ENCODE measurements at regions of chr5 and their contacts with region 1.

Region 1: GRCh38 chr5:142807372-142807911 is 37.3 kb downstream of the ARHGAP26 start:
- DNase-seq: no peak
- H3K4me3 ChIP-seq: no peak overlapping the region
- H3K27ac ChIP-seq: no peak overlapping the region
- H3K4me1 ChIP-seq: peaks cover 2 to 12% (median 7%) of the 10 kb centered on the region in 4 experiments; a peak in 4 of 7 replicates
- H3K27me3 ChIP-seq: no peaks in the 10 kb centered on the region; a peak in 1 of 7 replicates
- CTCF ChIP-seq: no peak
- EP300 ChIP-seq: no peak
- POLR2A ChIP-seq: no peak
- RAD21 ChIP-seq: no peak

Region 2: GRCh38 chr5:142699184-142699720 is 108.2 kb before region 1 on chr5:
- CTCF ChIA-PET with region 1: no interaction called
- POLR2A ChIA-PET with region 1: no interaction called
- DNase-seq: peak; percentile 74 to 96
- H3K4me3 ChIP-seq: no peak overlapping the region
- H3K27ac ChIP-seq: no peak overlapping the region
- H3K4me1 ChIP-seq: peaks cover 3 to 30% (median 14%) of the 10 kb centered on the region in 4 experiments
- H3K27me3 ChIP-seq: no peaks in the 10 kb centered on the region
- CTCF ChIP-seq: peak; percentile 83 to 99 (median 97)
- EP300 ChIP-seq: no peak
- POLR2A ChIP-seq: no peak
- RAD21 ChIP-seq: peak; percentile 100

Region 3: DNA sequence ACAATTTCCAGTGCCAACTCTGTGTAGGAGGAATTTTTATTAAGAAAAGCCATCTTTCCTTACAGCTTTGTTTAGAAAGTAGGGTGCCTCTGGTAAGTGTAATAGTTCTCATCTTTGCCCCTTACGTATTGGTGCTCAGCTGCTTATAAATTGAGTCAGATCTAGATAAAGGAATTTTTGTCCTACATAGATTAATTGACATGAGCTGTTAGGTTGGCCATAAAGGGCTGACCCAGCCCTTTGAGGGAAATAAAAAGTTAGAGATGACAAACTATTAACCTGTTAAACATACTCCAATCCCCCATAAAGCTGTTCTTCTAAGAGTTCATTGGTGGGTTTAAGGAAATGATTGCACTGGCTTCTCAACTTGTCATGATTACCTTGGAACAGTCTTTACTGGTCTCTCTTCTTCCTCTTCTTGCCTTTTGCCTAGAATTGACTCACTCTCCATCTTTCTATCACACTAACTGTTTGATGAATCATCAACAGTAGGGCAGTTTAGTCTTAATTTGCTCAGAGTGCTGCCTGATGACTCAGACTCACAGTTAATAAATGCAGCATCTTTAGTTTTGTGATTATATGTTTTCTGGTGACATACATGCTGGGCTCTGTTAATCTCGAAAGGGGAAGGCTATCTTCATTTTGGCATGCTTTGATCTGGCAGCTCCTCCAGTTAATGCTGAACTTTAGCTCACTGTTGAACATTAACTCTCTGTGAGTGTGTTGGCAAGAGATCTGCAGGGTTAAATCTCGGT is 14.5 kb after region 1 on chr5:
- CTCF ChIA-PET with region 1: interaction called, 12 read pairs
- POLR2A ChIA-PET with region 1: interaction called, 3 read pairs
- DNase-seq: no peak
- H3K4me3 ChIP-seq: no peak overlapping the region
- H3K27ac ChIP-seq: no peak overlapping the region
- H3K4me1 ChIP-seq: peaks cover 0 to 15% (median 13%) of the 10 kb centered on the region in 4 experiments; a peak in 5 of 7 replicates
- H3K27me3 ChIP-seq: no peaks in the 10 kb centered on the region
- CTCF ChIP-seq: no peak
- EP300 ChIP-seq: no peak
- POLR2A ChIP-seq: no peak
- RAD21 ChIP-seq: no peak

Region 4: GRCh38 chr5:142906863-142907671 is 99.6 kb after region 1 on chr5:
- CTCF ChIA-PET with region 1: no interaction called
- POLR2A ChIA-PET with region 1: no interaction called
- DNase-seq: no peak
- H3K4me3 ChIP-seq: no peak overlapping the region
- H3K27ac ChIP-seq: no peak overlapping the region
- H3K4me1 ChIP-seq: peaks cover 0 to 6% (median 3%) of the 10 kb centered on the region in 4 experiments; a peak in 3 of 7 replicates
- H3K27me3 ChIP-seq: no peaks in the 10 kb centered on the region
- CTCF ChIP-seq: no peak
- EP300 ChIP-seq: no peak
- POLR2A ChIP-seq: no peak
- RAD21 ChIP-seq: no peak

Region 5: GRCh38 chr5:143023411-143024096 is 216.1 kb after region 1 on chr5:
- CTCF ChIA-PET with region 1: no interaction called
- POLR2A ChIA-PET with region 1: no interaction called
- DNase-seq: no peak
- H3K4me3 ChIP-seq: no peak overlapping the region
- H3K27ac ChIP-seq: no peak overlapping the region
- H3K4me1 ChIP-seq: peaks cover 2 to 11% (median 7%) of the 10 kb centered on the region in 4 experiments; a peak in 5 of 7 replicates
- H3K27me3 ChIP-seq: no peaks in the 10 kb centered on the region
- CTCF ChIP-seq: no peak
- EP300 ChIP-seq: no peak
- POLR2A ChIP-seq: no peak
- RAD21 ChIP-seq: no peak